WTC11 (cell line): ENCODE measurements at regions of chr1 and their contacts with region 1.

Region 1: DNA sequence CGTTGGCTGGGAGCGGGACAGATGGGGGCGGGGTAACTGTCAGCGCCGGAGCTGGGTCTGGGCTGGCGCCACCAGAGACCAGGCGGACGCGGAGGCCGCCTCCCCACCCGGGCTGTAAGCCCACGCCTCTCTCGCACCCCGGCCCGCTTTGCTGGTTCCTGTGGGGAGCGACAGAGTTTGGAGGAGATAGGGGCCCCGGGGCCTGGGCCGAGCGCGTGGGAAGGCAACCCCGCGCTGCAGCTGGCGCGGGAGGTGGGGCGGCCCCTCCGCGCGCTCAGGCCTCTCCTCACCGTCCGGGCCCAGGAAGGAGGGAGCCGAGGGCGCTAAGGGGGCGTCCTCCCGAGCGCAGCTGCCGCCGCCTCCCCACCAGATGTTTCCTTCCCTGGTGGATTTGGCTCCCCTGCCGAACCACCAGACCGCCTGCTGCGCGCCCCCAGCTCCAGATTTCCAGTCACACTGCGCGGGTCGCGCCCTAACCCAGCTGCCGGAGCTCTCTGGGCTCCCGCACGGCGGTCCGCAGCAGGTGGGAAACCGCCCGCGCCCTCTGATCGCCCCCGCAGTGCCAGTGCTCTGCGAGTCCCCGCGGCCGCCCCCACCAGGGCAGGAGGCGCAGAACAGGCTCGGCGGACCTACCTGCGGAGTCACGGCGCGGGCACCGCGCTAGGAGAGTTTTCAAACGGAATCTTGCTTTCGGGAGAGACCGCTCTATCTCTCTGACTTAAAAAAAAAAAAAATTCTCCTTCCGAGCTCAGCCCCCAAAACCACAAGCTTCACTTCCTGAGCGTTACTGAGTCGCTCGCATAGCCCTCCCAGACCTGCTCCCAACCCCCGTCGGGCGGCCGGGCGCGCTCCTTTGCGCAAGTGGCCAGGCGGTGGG is 1.1 kb downstream of the GFI1 start:
- DNase-seq: peak; percentile 80
- ATAC-seq: peak; percentile 8
- H3K4me3 Mint-ChIP-seq: peak overlapping the region; percentile 77
- H3K27ac Mint-ChIP-seq: no peak overlapping the region
- H3K4me1 Mint-ChIP-seq: peaks cover 35% of the 10 kb centered on the region
- H3K27me3 Mint-ChIP-seq: peaks cover 96% of the 10 kb centered on the region
- CTCF ChIP-seq: peak; percentile 20; the same call in 1 of the 2 replicates

Region 2: DNA sequence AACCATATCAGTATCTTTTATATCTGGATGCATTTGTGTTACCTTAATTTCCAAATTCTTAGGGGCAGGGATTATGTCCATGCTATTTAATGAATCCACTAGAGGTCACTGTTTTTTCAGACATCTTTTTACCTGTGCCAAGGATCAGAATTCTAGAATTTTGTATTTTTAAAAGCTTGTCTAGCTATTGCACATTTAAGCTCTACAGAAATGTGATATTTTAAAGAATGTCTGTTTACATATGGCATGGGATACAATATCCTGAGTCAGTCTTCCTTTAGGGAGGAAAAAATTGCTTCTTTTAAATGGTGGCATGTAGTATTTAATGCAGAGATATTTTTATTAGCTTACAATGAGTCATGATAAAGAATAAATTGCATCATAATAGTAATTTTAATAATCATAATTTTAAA is 175.4 kb before region 1 on chr1:
- CTCF ChIA-PET with region 1: interaction called, 11 read pairs
- POLR2A ChIA-PET with region 1: no interaction called
- DNase-seq: no peak
- ATAC-seq: 0 out of 2 replicates have a peak, but pooled peaks have one; percentile 26
- H3K4me3 Mint-ChIP-seq: no peak overlapping the region
- H3K27ac Mint-ChIP-seq: no peak overlapping the region
- H3K4me1 Mint-ChIP-seq: peaks cover 17% of the 10 kb centered on the region
- H3K27me3 Mint-ChIP-seq: no peaks in the 10 kb centered on the region
- CTCF ChIP-seq: no peak

Region 3: GRCh38 chr1:92473781-92474495 is 11.7 kb before region 1 on chr1:
- CTCF ChIA-PET with region 1: interaction called, 10 read pairs
- POLR2A ChIA-PET with region 1: no interaction called
- DNase-seq: no peak
- ATAC-seq: peak; percentile 11; the same call in 1 of the 2 replicates
- H3K4me3 Mint-ChIP-seq: no peak overlapping the region
- H3K27ac Mint-ChIP-seq: no peak overlapping the region
- H3K4me1 Mint-ChIP-seq: peaks cover 27% of the 10 kb centered on the region
- H3K27me3 Mint-ChIP-seq: peaks cover 63% of the 10 kb centered on the region
- CTCF ChIP-seq: no peak